IMR-90 (cell line): ENCODE measurements at regions of chr2 and their contacts with region 1.

Region 1: DNA sequence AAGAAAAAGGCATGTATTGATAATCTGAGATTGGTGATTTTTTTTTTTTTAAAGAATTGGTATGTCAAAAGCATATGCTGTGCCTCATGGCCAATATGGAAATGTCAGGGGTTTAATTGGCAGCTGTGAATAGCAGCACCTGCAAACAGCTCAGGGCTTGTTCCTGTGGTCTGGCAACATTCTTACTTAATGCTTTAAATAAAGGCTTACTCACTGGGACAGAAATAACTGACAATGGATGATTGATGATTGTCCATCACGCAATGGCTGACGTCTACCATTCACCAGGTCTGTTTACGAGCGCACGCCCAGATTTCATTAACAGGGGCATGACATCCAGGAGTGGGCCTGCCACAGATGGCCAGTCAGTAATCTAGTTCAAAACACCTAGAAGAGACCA is 66.7 kb downstream of the ETAA1 start:
- DNase-seq: peak; percentile 67
- ATAC-seq: no peak
- H3K4me3 ChIP-seq: no peak overlapping the region
- H3K27ac ChIP-seq: no peak overlapping the region
- H3K4me1 ChIP-seq: no peaks in the 10 kb centered on the region
- H3K27me3 ChIP-seq: no peaks in the 10 kb centered on the region
- CTCF ChIP-seq: no peak
- POLR2A ChIP-seq: no peak
- RAD21 ChIP-seq: no peak

Region 2: GRCh38 chr2:67169417-67170140 is 294.2 kb before region 1 on chr2:
- CTCF ChIA-PET with region 1: no interaction called
- POLR2A ChIA-PET with region 1: interaction called, 10 read pairs
- dilution Hi-C with region 1: no loop called
- in situ Hi-C with region 1: no loop called
- intact Hi-C with region 1: no loop called
- DNase-seq: peak; percentile 56
- ATAC-seq: no peak
- H3K4me3 ChIP-seq: no peak overlapping the region
- H3K27ac ChIP-seq: no peak overlapping the region
- H3K4me1 ChIP-seq: no peaks in the 10 kb centered on the region; the same call in 1 of the 2 replicates
- H3K27me3 ChIP-seq: no peaks in the 10 kb centered on the region
- CTCF ChIP-seq: no peak
- POLR2A ChIP-seq: no peak
- RAD21 ChIP-seq: no peak

Region 3: GRCh38 chr2:67782443-67782842 is 318.6 kb after region 1 on chr2:
- CTCF ChIA-PET with region 1: no interaction called
- POLR2A ChIA-PET with region 1: interaction called, 18 read pairs
- dilution Hi-C with region 1: no loop called
- in situ Hi-C with region 1: no loop called
- intact Hi-C with region 1: no loop called
- DNase-seq: peak; percentile 45
- ATAC-seq: peak; percentile 24; the same call in 1 of the 2 replicates
- H3K4me3 ChIP-seq: no peak overlapping the region
- H3K27ac ChIP-seq: no peak overlapping the region
- H3K4me1 ChIP-seq: peaks cover 6% of the 10 kb centered on the region; the same call in 1 of the 2 replicates
- H3K27me3 ChIP-seq: no peaks in the 10 kb centered on the region
- CTCF ChIP-seq: no peak
- POLR2A ChIP-seq: no peak
- RAD21 ChIP-seq: no peak